ENCODE measurements at regions of chr2 and their contacts with region 1.

Region 1: DNA sequence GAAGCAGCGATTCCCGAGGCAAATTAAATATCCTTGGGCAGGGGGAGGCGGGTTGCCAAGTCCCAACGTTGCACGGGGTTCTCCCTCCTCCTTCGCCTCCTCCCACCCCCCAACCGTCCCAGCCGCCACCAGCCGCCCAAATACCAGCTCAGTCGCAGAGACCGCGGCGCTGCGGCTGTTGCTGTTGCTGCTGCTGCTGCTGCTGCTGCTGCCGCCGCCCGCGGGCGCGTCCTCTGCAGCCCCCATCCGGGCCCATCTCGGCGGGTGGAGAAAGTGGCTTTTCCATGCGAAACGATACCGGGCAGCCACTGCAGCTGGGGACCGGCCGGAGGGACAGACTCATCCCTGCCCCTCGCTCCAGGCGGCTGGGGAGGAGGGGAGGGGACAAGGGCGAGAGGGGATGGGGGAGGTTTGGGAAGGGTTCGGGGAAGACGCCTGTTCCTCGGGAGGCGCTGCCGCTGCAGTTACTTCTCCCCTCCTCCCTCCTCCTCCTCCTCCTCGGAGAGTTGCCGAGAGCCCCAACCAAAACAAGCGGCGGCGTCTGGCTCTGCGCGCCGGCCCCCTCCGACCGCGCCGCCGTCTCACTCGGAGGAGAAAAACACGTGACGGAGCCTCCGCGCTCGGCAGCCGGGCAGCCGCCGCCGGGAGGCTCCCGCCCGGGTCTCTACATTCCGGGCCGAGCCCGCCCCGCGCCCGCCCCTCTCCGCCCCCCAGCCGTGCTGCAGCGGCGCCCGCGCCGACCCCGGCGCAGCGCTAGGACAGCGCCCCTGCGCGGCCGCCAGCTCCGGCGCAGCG is at the start of gene IRS1:
- DNase-seq: no peak
- ATAC-seq: peak; percentile 53
- H3K4me3 ChIP-seq: peak within 1 kb of the TSS; percentile 93
- H3K27ac ChIP-seq: no peak within 1 kb of the TSS
- H3K4me1 ChIP-seq: peaks cover 8% of the 10 kb centered on the region
- H3K27me3 ChIP-seq: no peaks in the 10 kb centered on the region
- CTCF ChIP-seq: peak in 2 of 3 experiments; percentile 1 to 37; a peak in 2 of 6 replicates
- EP300 ChIP-seq: no peak
- POLR2A ChIP-seq: 0 out of 2 replicates have a peak, but pooled peaks have one; percentile 17
- RAD21 ChIP-seq: peak; percentile 56
- polyA plus RNA-seq, gene IRS1: 0.03 to 0.13 TPM

Region 2: DNA sequence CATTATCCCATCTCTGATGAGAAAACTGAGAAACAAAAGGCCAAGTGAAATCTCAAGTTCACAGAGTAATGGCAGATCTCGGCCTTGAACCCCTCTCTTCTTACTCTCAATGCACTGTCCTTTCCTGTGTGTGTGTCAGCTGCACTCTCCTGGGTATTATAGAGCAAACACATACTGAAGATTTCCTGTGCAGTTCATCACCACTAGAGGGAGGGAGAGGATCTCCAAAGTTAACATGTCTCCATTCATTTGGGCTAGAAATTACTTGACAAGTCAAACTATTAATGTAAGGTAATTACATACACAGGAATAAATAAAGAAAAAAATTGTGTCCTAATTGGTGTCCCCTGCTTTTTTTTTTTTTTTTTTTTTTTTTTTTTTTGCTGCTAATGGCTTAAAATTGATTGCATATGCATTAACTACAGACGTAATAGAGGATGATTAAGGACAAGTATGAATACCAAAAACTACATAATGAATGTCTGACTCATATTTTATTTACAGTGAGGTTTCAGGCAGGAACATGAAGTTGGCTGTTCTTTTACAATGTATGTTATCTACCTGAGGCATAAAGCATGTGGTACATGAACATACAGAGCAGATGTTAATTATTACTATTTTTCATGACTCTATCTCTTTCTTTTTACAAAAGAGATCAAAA is 1130.6 kb before region 1 on chr2:
- CTCF ChIA-PET with region 1: interaction called, 34 read pairs
- POLR2A ChIA-PET with region 1: no interaction called
- RAD21 ChIA-PET with region 1: interaction called, 13 read pairs
- SMC1A ChIA-PET with region 1: interaction called, 13 read pairs
- in situ Hi-C with region 1: loop called (anchors 5 kb)
- intact Hi-C with region 1: loop called (anchors 2 kb)
- DNase-seq: peak; percentile 12
- ATAC-seq: peak; percentile 94
- H3K4me3 ChIP-seq: no peak overlapping the region
- H3K27ac ChIP-seq: no peak overlapping the region
- H3K4me1 ChIP-seq: no peaks in the 10 kb centered on the region
- H3K27me3 ChIP-seq: no peaks in the 10 kb centered on the region
- CTCF ChIP-seq: peak; percentile 72 to 75 (median 73)
- EP300 ChIP-seq: no peak
- POLR2A ChIP-seq: no peak
- RAD21 ChIP-seq: peak; percentile 71

Region 3: DNA sequence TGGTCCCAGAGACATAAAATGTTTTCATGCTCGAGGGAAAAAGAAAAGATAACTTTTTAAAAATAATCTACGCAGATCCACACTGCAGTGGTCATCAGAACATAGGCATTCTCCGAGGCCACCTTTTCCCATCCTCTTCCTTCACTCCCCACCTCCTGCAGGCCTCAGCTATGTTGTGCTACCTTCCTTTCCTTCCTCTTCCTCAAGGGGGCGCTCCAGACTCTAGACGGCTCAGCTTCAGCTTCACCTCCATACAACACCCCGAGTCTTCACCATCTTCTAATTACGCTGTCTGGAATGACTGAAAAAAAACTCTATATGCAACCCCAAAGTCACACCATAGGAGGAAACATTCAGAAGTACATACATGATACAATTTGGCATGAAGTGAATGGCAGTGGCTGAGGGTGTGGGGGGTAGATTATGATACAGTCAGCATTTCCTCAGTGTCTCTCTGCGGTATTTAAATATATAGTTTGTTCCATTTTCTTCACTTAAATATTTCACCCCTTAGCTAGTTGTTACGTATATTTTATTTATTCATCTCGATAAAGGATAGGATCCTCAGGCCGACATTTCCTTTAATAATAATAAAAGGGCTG is 583.4 kb before region 1 on chr2:
- CTCF ChIA-PET with region 1: interaction called, 80 read pairs
- POLR2A ChIA-PET with region 1: no interaction called
- RAD21 ChIA-PET with region 1: interaction called, 18 read pairs
- SMC1A ChIA-PET with region 1: interaction called, 27 read pairs
- in situ Hi-C with region 1: loop called (anchors 10 kb)
- intact Hi-C with region 1: loop called (anchors 2 kb)
- DNase-seq: no peak
- ATAC-seq: peak; percentile 96
- H3K4me3 ChIP-seq: no peak overlapping the region
- H3K27ac ChIP-seq: no peak overlapping the region
- H3K4me1 ChIP-seq: no peaks in the 10 kb centered on the region
- H3K27me3 ChIP-seq: no peaks in the 10 kb centered on the region
- CTCF ChIP-seq: peak; percentile 56 to 64 (median 59)
- EP300 ChIP-seq: no peak
- POLR2A ChIP-seq: no peak
- RAD21 ChIP-seq: peak; percentile 81

Region 4: GRCh38 chr2:226772389-226773179 is 26.8 kb before region 1 on chr2:
- CTCF ChIA-PET with region 1: interaction called, 8 read pairs
- POLR2A ChIA-PET with region 1: no interaction called
- RAD21 ChIA-PET with region 1: interaction called, 8 read pairs
- SMC1A ChIA-PET with region 1: interaction called, 10 read pairs
- in situ Hi-C with region 1: no loop called
- intact Hi-C with region 1: loop called (anchors 2 kb)
- DNase-seq: peak; percentile 82
- ATAC-seq: peak; percentile 97
- H3K4me3 ChIP-seq: no peak overlapping the region
- H3K27ac ChIP-seq: no peak overlapping the region
- H3K4me1 ChIP-seq: peaks cover 14% of the 10 kb centered on the region
- H3K27me3 ChIP-seq: no peaks in the 10 kb centered on the region
- CTCF ChIP-seq: no peak
- EP300 ChIP-seq: peak; percentile 92 to 95; a peak in 3 of 4 replicates
- POLR2A ChIP-seq: no peak
- RAD21 ChIP-seq: peak; percentile 5; the same call in 1 of the 2 replicates

Region 5: GRCh38 chr2:226818930-226819329 is 19.6 kb after region 1 on chr2:
- CTCF ChIA-PET with region 1: interaction called, 16 read pairs
- POLR2A ChIA-PET with region 1: no interaction called
- RAD21 ChIA-PET with region 1: interaction called, 3 read pairs
- SMC1A ChIA-PET with region 1: interaction called, 4 read pairs
- in situ Hi-C with region 1: no loop called
- intact Hi-C with region 1: no loop called
- DNase-seq: no peak
- ATAC-seq: no peak
- H3K4me3 ChIP-seq: no peak overlapping the region
- H3K27ac ChIP-seq: no peak overlapping the region
- H3K4me1 ChIP-seq: no peaks in the 10 kb centered on the region
- H3K27me3 ChIP-seq: no peaks in the 10 kb centered on the region
- CTCF ChIP-seq: no peak
- EP300 ChIP-seq: no peak
- POLR2A ChIP-seq: no peak
- RAD21 ChIP-seq: no peak

Region 6: GRCh38 chr2:227106845-227107759 is 307.7 kb after region 1 on chr2:
- CTCF ChIA-PET with region 1: no interaction called
- POLR2A ChIA-PET with region 1: no interaction called
- RAD21 ChIA-PET with region 1: no interaction called
- SMC1A ChIA-PET with region 1: interaction called, 7 read pairs
- in situ Hi-C with region 1: no loop called
- intact Hi-C with region 1: loop called (anchors 5 kb)
- DNase-seq: no peak
- ATAC-seq: peak; percentile 86
- H3K4me3 ChIP-seq: no peak overlapping the region
- H3K27ac ChIP-seq: no peak overlapping the region
- H3K4me1 ChIP-seq: no peaks in the 10 kb centered on the region
- H3K27me3 ChIP-seq: no peaks in the 10 kb centered on the region
- CTCF ChIP-seq: peak; percentile 70 to 83 (median 71)
- EP300 ChIP-seq: no peak
- POLR2A ChIP-seq: no peak
- RAD21 ChIP-seq: peak; percentile 85

Region 7: GRCh38 chr2:227130636-227131035 is 331.3 kb after region 1 on chr2:
- CTCF ChIA-PET with region 1: no interaction called
- POLR2A ChIA-PET with region 1: no interaction called
- RAD21 ChIA-PET with region 1: no interaction called
- SMC1A ChIA-PET with region 1: no interaction called
- in situ Hi-C with region 1: no loop called
- intact Hi-C with region 1: no loop called
- DNase-seq: no peak
- ATAC-seq: peak; percentile 27; the same call in 2 of the 3 replicates
- H3K4me3 ChIP-seq: no peak overlapping the region
- H3K27ac ChIP-seq: no peak overlapping the region
- H3K4me1 ChIP-seq: no peaks in the 10 kb centered on the region
- H3K27me3 ChIP-seq: no peaks in the 10 kb centered on the region
- CTCF ChIP-seq: no peak
- EP300 ChIP-seq: no peak
- POLR2A ChIP-seq: no peak
- RAD21 ChIP-seq: no peak